GM12878 (cell line): ENCODE measurements at regions of chr9 and their contacts with region 1.

Region 1: GRCh38 chr9:9603345-9603744 is 1009.5 kb downstream of the PTPRD start:
- DNase-seq: no peak
- ATAC-seq: peak; percentile 28; the same call in 1 of the 3 replicates
- H3K4me3 ChIP-seq: no peak overlapping the region
- H3K27ac ChIP-seq: no peak overlapping the region
- H3K4me1 ChIP-seq: no peaks in the 10 kb centered on the region
- H3K27me3 ChIP-seq: no peaks in the 10 kb centered on the region
- CTCF ChIP-seq: no peak
- EP300 ChIP-seq: no peak
- POLR2A ChIP-seq: no peak
- RAD21 ChIP-seq: no peak

Region 2: GRCh38 chr9:9362332-9362731 is 241.0 kb before region 1 on chr9:
- CTCF ChIA-PET with region 1: no interaction called
- POLR2A ChIA-PET with region 1: no interaction called
- RAD21 ChIA-PET with region 1: no interaction called
- SMC1A ChIA-PET with region 1: no interaction called
- in situ Hi-C with region 1: no loop called
- intact Hi-C with region 1: no loop called
- DNase-seq: no peak
- ATAC-seq: no peak
- H3K4me3 ChIP-seq: no peak overlapping the region
- H3K27ac ChIP-seq: no peak overlapping the region
- H3K4me1 ChIP-seq: no peaks in the 10 kb centered on the region
- H3K27me3 ChIP-seq: no peaks in the 10 kb centered on the region
- CTCF ChIP-seq: no peak
- EP300 ChIP-seq: no peak
- POLR2A ChIP-seq: no peak
- RAD21 ChIP-seq: no peak

Region 3: DNA sequence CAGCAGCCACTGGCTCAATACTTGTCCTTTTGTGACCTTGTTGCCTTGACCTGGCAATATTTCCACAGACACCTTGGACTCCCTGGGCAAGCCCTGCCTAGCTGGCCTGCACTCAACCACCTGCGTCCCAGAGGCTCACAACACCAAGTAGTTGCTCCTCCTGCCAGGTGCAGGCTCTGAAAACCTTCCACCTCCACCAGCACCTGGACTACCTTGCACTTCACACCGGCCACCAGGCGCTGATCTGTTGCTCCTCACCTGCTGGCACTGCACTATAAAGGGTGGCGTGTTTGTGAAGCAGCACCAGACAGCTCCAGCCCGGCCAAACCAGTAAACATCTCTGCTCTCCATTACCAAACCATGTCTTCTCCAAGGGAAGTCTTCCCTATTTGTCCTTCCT is 11.7 kb after region 1 on chr9:
- CTCF ChIA-PET with region 1: interaction called, 5 read pairs
- POLR2A ChIA-PET with region 1: no interaction called
- RAD21 ChIA-PET with region 1: no interaction called
- SMC1A ChIA-PET with region 1: interaction called, 11 read pairs
- in situ Hi-C with region 1: no loop called
- intact Hi-C with region 1: no loop called
- DNase-seq: no peak
- ATAC-seq: no peak; the same call in 2 of the 3 replicates
- H3K4me3 ChIP-seq: no peak overlapping the region
- H3K27ac ChIP-seq: no peak overlapping the region
- H3K4me1 ChIP-seq: no peaks in the 10 kb centered on the region
- H3K27me3 ChIP-seq: no peaks in the 10 kb centered on the region
- CTCF ChIP-seq: no peak
- EP300 ChIP-seq: no peak
- POLR2A ChIP-seq: no peak
- RAD21 ChIP-seq: no peak

Region 4: DNA sequence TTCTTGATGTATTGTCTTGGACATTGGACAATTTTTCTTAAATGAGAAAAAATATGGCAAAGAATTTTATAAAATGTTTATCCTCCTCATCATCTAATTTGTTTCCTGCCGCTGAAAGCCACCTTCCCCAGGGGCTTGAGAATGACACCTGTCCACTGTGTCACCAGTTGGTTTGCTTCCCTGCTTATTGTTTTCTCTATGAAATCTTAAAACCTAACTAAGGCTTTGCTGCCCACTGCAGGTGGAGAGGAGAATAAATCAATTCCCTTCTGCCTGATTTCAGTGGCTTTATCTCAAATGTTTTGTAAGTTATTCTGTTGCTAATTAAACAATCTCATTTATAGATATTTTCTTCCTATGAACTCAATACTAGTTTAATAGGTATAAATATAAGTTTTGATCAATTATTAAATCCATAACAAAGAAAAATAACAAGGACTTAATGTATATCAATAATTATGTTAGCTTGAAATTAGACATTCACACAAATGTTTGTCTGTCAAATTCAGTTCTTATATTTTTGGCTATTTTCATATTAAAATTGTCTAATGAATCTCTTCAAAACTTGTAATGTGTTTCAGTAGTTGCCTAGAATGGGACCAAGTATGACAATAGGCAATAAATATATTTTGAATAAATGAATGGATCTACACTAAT is 187.0 kb after region 1 on chr9:
- CTCF ChIA-PET with region 1: interaction called, 119 read pairs
- POLR2A ChIA-PET with region 1: interaction called, 4 read pairs
- RAD21 ChIA-PET with region 1: interaction called, 53 read pairs
- SMC1A ChIA-PET with region 1: interaction called, 69 read pairs
- in situ Hi-C with region 1: loop called (anchors 5 kb)
- intact Hi-C with region 1: loop called (anchors 1 kb)
- DNase-seq: no peak
- ATAC-seq: peak; percentile 74
- H3K4me3 ChIP-seq: no peak overlapping the region
- H3K27ac ChIP-seq: no peak overlapping the region
- H3K4me1 ChIP-seq: no peaks in the 10 kb centered on the region
- H3K27me3 ChIP-seq: no peaks in the 10 kb centered on the region
- CTCF ChIP-seq: peak; percentile 67 to 74 (median 71)
- EP300 ChIP-seq: no peak
- POLR2A ChIP-seq: no peak
- RAD21 ChIP-seq: peak; percentile 89

Region 5: GRCh38 chr9:10045598-10045997 is 442.3 kb after region 1 on chr9:
- CTCF ChIA-PET with region 1: no interaction called
- POLR2A ChIA-PET with region 1: no interaction called
- RAD21 ChIA-PET with region 1: no interaction called
- SMC1A ChIA-PET with region 1: no interaction called
- in situ Hi-C with region 1: no loop called
- intact Hi-C with region 1: no loop called
- DNase-seq: no peak
- ATAC-seq: no peak
- H3K4me3 ChIP-seq: no peak overlapping the region
- H3K27ac ChIP-seq: no peak overlapping the region
- H3K4me1 ChIP-seq: no peaks in the 10 kb centered on the region
- H3K27me3 ChIP-seq: no peaks in the 10 kb centered on the region
- CTCF ChIP-seq: peak in 1 of 3 experiments; percentile 9; a peak in 2 of 6 replicates
- EP300 ChIP-seq: no peak
- POLR2A ChIP-seq: no peak
- RAD21 ChIP-seq: no peak